Dendritic cell treated with granulocyte-macrophage colony-stimulating factor and Interleukin-4, amounts not matched to agents 40 ng/mL and 50 ng/mL, for 4 days (primary cell): ENCODE measurements at regions of chr7 and their contacts with region 1.

Region 1: GRCh38 chr7:158976849-158977593 is 120.7 kb downstream of the DYNC2I1 start:
- H3K4me3 Mint-ChIP-seq: peak overlapping the region; percentile 85
- H3K27ac Mint-ChIP-seq: peak overlapping the region; percentile 79
- H3K4me1 Mint-ChIP-seq: peaks cover 10% of the 10 kb centered on the region
- H3K27me3 Mint-ChIP-seq: peaks cover 11% of the 10 kb centered on the region

Region 2: GRCh38 chr7:158695726-158696452 is 281.1 kb before region 1 on chr7:
- intact Hi-C with region 1: loop called (anchors 1 kb)
- H3K4me3 Mint-ChIP-seq: no peak overlapping the region
- H3K27ac Mint-ChIP-seq: peak overlapping the region; percentile 45
- H3K4me1 Mint-ChIP-seq: peaks cover 7% of the 10 kb centered on the region
- H3K27me3 Mint-ChIP-seq: no peaks in the 10 kb centered on the region

Region 3: GRCh38 chr7:158863611-158864506 is 113.2 kb before region 1 on chr7:
- intact Hi-C with region 1: loop called (anchors 10 kb)
- H3K4me3 Mint-ChIP-seq: peak overlapping the region; percentile 86
- H3K27ac Mint-ChIP-seq: peak overlapping the region; percentile 98
- H3K4me1 Mint-ChIP-seq: peaks cover 32% of the 10 kb centered on the region
- H3K27me3 Mint-ChIP-seq: no peaks in the 10 kb centered on the region

Region 4: GRCh38 chr7:158933468-158934139 is 43.4 kb before region 1 on chr7:
- intact Hi-C with region 1: no loop called
- H3K4me3 Mint-ChIP-seq: no peak overlapping the region
- H3K27ac Mint-ChIP-seq: no peak overlapping the region
- H3K4me1 Mint-ChIP-seq: no peaks in the 10 kb centered on the region
- H3K27me3 Mint-ChIP-seq: no peaks in the 10 kb centered on the region

Region 5: DNA sequence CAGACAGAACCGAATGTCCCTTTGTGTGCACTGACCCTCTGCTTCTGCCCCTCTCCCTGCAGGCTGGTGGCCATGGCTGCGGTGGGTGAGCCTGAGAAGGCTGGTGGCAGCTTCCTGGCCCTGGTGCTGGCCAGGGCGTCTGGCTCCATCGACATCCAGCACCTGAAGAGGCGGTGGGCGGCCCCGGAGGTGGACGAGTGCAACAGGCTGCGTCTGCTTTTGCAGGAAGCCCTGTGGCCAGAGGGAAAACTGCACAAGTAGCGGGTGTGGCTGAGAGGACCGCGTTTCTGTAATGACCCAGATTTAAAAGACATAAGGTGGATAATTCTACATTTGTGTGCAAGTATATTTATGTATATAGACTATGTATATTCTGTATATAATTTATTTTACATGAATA is 31.5 kb before region 1 on chr7:
- intact Hi-C with region 1: no loop called
- H3K4me3 Mint-ChIP-seq: no peak overlapping the region
- H3K27ac Mint-ChIP-seq: no peak overlapping the region
- H3K4me1 Mint-ChIP-seq: no peaks in the 10 kb centered on the region
- H3K27me3 Mint-ChIP-seq: no peaks in the 10 kb centered on the region